ENCODE measurements at regions of chr15 and their contacts with region 1.

Region 1: DNA sequence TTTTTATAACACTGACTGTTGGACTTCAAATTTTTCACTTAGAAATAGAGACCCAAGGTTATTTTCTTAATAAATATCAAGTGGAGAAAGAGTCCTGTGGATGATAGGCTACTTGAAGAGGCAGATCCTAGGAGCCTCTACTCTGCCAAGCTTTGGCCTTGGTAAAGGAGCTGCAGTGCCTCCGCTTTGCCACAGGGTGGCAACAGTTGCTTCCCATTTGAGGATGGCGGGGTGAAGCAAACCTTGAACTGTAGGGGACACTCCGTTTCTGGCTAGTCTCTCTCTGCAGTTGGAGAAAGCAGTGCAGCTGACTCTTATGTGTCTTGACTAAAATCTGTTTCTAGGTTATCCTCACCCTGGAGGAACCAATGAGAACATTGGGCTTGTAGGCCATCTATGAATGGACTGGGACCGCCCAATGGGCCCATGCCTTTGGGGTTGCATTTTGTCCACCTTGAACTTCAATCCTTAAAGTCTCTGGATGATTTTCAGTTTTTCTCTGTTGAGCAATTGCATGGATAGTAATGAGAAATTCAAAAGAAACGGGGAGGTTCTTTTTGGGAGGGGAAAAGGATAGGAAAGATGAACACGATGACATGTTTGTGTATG is 9.8 kb downstream of the SCG5 start:
- DNase-seq: no peak
- ATAC-seq: peak; percentile 97
- H3K4me3 ChIP-seq: no peak overlapping the region
- H3K27ac ChIP-seq: no peak overlapping the region
- H3K4me1 ChIP-seq: no peaks in the 10 kb centered on the region
- H3K27me3 ChIP-seq: no peaks in the 10 kb centered on the region
- CTCF ChIP-seq: peak; percentile 87

Region 2: DNA sequence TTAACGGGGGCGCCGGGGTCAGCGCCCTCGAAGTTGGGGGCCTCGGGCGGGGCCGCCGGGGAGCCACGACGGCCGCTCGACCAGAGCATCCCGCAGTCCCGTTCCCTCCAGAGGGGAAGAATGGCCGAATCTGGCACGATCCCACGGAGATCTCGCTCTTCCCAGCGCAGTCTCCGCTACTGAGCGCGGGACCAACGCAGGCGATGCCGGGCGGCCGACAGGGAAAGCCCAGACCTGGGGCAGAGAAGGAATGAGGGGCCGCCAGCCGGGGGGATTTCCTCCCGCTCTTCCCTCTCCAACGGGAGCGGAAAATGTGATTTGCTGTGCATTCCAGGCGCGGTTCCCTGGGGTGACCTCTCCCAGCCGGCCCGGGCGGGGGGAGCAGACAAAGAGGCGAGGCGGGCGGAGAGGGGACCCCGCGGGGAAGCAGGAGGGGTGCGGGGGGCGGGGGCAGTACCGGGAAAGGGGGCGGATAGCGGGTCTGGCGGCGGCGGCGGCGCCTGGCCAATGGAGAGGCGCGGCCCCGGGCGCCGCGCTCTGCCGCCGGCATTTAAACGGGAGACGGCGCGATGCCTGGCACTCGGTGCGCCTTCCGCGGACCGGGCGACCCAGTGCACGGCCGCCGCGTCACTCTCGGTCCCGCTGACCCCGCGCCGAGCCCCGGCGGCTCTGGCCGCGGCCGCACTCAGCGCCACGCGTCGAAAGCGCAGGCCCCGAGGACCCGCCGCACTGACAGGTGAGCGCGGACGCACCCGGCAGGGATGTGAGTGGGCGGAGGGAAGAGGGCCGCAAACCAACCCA is 66.3 kb after region 1 on chr15 and contains the start of gene GREM1:
- intact Hi-C with region 1: loop called (anchors 10 kb)
- DNase-seq: no peak
- ATAC-seq: peak; percentile 10
- H3K4me3 ChIP-seq: peak within 1 kb of the TSS; percentile 30
- H3K27ac ChIP-seq: no peak within 1 kb of the TSS
- H3K4me1 ChIP-seq: peaks cover 17% of the 10 kb centered on the region
- H3K27me3 ChIP-seq: peaks cover 74% of the 10 kb centered on the region
- CTCF ChIP-seq: no peak
- total RNA-seq, gene GREM1: 2.8 TPM